Prostate gland (tissue), 2 donors: ENCODE measurements at regions of chr6 and their contacts with region 1.

Region 1: GRCh38 chr6:157314705-157315321 is 8.5 kb downstream of the TMEM242 start:
- DNase-seq: peak; percentile 31
- H3K4me3 ChIP-seq: no peak overlapping the region
- H3K27ac ChIP-seq: no peak overlapping the region
- H3K4me1 ChIP-seq: no peaks in the 10 kb centered on the region
- H3K27me3 ChIP-seq: no peaks in the 10 kb centered on the region
- CTCF ChIP-seq: peak; percentile 53 to 98 (median 93)
- POLR2A ChIP-seq: no peak

Region 2: GRCh38 chr6:157823001-157823527 is 508.3 kb after region 1 on chr6 and contains the start of gene SNX9:
- intact Hi-C with region 1: loop called (anchors 5 kb)
- DNase-seq: peak; percentile 74
- H3K4me3 ChIP-seq: peak within 1 kb of the TSS; percentile 69 to 93
- H3K27ac ChIP-seq: peak within 1 kb of the TSS; percentile 95 to 98
- H3K4me1 ChIP-seq: no peaks in the 10 kb centered on the region
- H3K27me3 ChIP-seq: no peaks in the 10 kb centered on the region
- CTCF ChIP-seq: peak in 2 of 4 experiments; percentile 34 to 51
- POLR2A ChIP-seq: peak; percentile 75
- total RNA-seq, gene SNX9: 39.2 to 40.6 TPM